Activated naive CD4-positive, alpha-beta T cell treated with anti-CD3 and anti-CD28 coated beads for 36 hours (primary cell): ENCODE measurements at regions of chr7 and their contacts with region 1.

Region 1: DNA sequence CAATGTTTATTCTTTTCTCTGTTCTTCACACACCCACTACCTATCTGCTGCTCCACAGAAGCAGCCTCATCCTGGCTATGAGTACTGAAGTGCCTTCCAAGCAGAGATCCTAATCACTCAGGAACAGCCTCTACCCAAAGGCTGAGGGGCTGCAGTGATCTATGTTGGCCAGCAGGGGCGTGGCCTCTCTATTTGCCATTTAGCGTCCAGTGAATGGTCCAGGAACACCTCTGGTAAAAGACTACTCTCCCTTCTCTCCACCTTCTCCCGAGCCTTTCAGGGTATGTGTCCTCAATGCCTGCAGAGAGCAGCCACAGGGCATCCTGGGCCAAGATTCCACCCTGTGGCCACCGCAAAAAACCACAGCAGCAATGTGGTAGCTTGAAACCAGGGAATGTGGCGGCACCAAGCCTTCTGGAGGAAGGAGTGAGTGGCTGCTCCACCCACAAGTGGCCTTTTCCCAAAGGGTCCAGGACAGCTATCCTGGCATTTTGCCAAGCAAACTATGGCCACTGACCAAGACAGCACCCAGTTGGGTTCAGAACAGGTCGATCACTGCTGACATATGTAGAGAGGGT is 70.9 kb downstream of the SYPL1 start:
- DNase-seq: peak; percentile 53
- H3K4me3 Mint-ChIP-seq: no peak overlapping the region
- H3K27ac Mint-ChIP-seq: no peak overlapping the region
- H3K4me1 Mint-ChIP-seq: peaks cover 27% of the 10 kb centered on the region
- H3K27me3 Mint-ChIP-seq: peaks cover 2% of the 10 kb centered on the region

Region 2: GRCh38 chr7:105581066-105581842 is 460.0 kb before region 1 on chr7 and contains the start of gene EFCAB10:
- CTCF ChIA-PET with region 1: no interaction called
- intact Hi-C with region 1: no loop called
- DNase-seq: peak; percentile 78
- H3K4me3 Mint-ChIP-seq: peak within 1 kb of the TSS; percentile 74
- H3K27ac Mint-ChIP-seq: no peak within 1 kb of the TSS
- H3K4me1 Mint-ChIP-seq: peaks cover 6% of the 10 kb centered on the region
- H3K27me3 Mint-ChIP-seq: peaks cover 5% of the 10 kb centered on the region
- total RNA-seq, gene EFCAB10: not detected

Region 3: GRCh38 chr7:105652359-105652993 is 388.8 kb before region 1 on chr7:
- CTCF ChIA-PET with region 1: interaction called, 15 read pairs
- intact Hi-C with region 1: loop called (anchors 1 kb)
- DNase-seq: peak; percentile 79
- H3K4me3 Mint-ChIP-seq: no peak overlapping the region
- H3K27ac Mint-ChIP-seq: no peak overlapping the region
- H3K4me1 Mint-ChIP-seq: peaks cover 10% of the 10 kb centered on the region
- H3K27me3 Mint-ChIP-seq: no peaks in the 10 kb centered on the region

Region 4: GRCh38 chr7:105769901-105770628 is 271.2 kb before region 1 on chr7:
- CTCF ChIA-PET with region 1: interaction called, 12 read pairs
- intact Hi-C with region 1: loop called (anchors 1 kb)
- DNase-seq: peak; percentile 39
- H3K4me3 Mint-ChIP-seq: no peak overlapping the region
- H3K27ac Mint-ChIP-seq: no peak overlapping the region
- H3K4me1 Mint-ChIP-seq: peaks cover 26% of the 10 kb centered on the region
- H3K27me3 Mint-ChIP-seq: no peaks in the 10 kb centered on the region

Region 5: GRCh38 chr7:106009403-106010226 is 31.6 kb before region 1 on chr7:
- CTCF ChIA-PET with region 1: interaction called, 26 read pairs
- intact Hi-C with region 1: loop called (anchors 1 kb)
- DNase-seq: peak; percentile 89
- H3K4me3 Mint-ChIP-seq: no peak overlapping the region
- H3K27ac Mint-ChIP-seq: no peak overlapping the region
- H3K4me1 Mint-ChIP-seq: peaks cover 22% of the 10 kb centered on the region
- H3K27me3 Mint-ChIP-seq: no peaks in the 10 kb centered on the region

Region 6: GRCh38 chr7:106153891-106154449 is 112.7 kb after region 1 on chr7:
- CTCF ChIA-PET with region 1: interaction called, 20 read pairs
- intact Hi-C with region 1: no loop called
- DNase-seq: peak; percentile 84
- H3K4me3 Mint-ChIP-seq: no peak overlapping the region
- H3K27ac Mint-ChIP-seq: no peak overlapping the region
- H3K4me1 Mint-ChIP-seq: peaks cover 9% of the 10 kb centered on the region
- H3K27me3 Mint-ChIP-seq: peaks cover 14% of the 10 kb centered on the region

Region 7: DNA sequence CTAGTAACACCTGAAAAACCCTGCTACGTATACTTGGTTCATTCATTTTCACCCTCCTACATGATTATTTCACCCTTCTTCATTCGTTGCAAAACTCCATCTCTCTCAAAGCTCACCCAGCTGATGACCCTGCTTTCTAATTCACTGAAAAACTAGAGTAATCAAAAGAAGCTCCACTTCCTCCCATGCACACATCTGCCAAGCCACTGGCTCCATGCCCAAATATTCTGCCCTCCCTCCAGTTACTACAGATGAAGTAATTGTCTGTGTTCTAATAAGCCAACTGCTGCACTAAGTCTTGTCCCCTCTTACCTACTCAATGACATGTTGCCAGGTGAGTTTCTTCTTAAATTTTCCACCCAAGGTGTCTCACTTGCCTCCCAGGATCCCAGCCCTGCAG is 716.6 kb after region 1 on chr7:
- CTCF ChIA-PET with region 1: no interaction called
- intact Hi-C with region 1: no loop called
- DNase-seq: no peak
- H3K4me3 Mint-ChIP-seq: no peak overlapping the region
- H3K27ac Mint-ChIP-seq: no peak overlapping the region
- H3K4me1 Mint-ChIP-seq: no peaks in the 10 kb centered on the region
- H3K27me3 Mint-ChIP-seq: no peaks in the 10 kb centered on the region